Activated naive CD4-positive, alpha-beta T cell treated with anti-CD3 and anti-CD28 coated beads for 36 hours (primary cell): ENCODE measurements at regions of chr9 and their contacts with region 1.

Region 1: GRCh38 chr9:33320568-33321261 is 30.4 kb downstream of the NFX1 start:
- DNase-seq: peak; percentile 57
- H3K4me3 Mint-ChIP-seq: no peak overlapping the region
- H3K27ac Mint-ChIP-seq: peak overlapping the region; percentile 85
- H3K4me1 Mint-ChIP-seq: peaks cover 21% of the 10 kb centered on the region
- H3K27me3 Mint-ChIP-seq: no peaks in the 10 kb centered on the region

Region 2: DNA sequence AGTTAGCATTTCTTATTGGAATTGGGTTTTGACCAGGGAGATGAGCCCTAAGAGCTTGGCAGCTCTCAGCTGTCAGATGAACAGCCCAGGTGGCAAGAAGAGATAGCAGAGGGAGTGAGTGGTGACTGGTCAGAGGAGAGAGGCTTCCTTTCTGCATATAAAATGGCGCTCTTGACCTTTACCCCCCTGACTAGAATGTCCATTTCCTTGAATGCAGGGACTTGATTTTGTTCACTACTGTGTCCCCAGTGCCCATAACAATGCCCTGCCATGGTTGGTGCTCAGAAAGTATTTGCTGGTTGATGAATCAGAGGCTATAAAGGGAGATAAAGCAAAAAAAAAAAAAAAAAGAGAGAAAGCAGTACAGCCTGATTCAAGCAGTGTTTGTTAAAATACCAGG is 48.7 kb before region 1 on chr9:
- CTCF ChIA-PET with region 1: no interaction called
- intact Hi-C with region 1: no loop called
- DNase-seq: no peak
- H3K4me3 Mint-ChIP-seq: no peak overlapping the region
- H3K27ac Mint-ChIP-seq: no peak overlapping the region
- H3K4me1 Mint-ChIP-seq: peaks cover 14% of the 10 kb centered on the region
- H3K27me3 Mint-ChIP-seq: no peaks in the 10 kb centered on the region

Region 3: DNA sequence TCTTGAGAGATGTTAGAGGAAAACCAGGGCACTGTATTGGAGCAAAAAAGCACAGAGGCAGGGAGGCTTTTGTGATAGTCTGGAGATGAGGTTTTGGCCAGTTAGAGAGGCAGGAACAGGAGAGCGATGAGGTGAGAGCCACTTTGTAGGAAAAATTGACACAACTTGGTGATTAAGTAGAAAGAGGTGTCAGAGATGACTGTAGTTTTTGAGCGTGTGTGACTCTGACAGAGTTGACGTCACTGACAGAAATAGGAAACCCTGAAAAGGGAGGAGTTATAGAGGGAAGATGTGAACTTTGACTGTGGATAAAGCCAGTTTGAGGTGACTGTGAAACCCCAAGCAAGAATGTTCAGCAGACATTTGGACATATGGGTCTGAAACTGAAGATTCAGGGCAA is 14.7 kb before region 1 on chr9:
- CTCF ChIA-PET with region 1: interaction called, 3 read pairs
- intact Hi-C with region 1: loop called (anchors 1 kb)
- DNase-seq: peak; percentile 69
- H3K4me3 Mint-ChIP-seq: no peak overlapping the region
- H3K27ac Mint-ChIP-seq: no peak overlapping the region
- H3K4me1 Mint-ChIP-seq: peaks cover 10% of the 10 kb centered on the region
- H3K27me3 Mint-ChIP-seq: no peaks in the 10 kb centered on the region

Region 4: GRCh38 chr9:33354651-33355211 is 34.0 kb after region 1 on chr9:
- CTCF ChIA-PET with region 1: no interaction called
- intact Hi-C with region 1: loop called (anchors 5 kb)
- DNase-seq: no peak
- H3K4me3 Mint-ChIP-seq: no peak overlapping the region
- H3K27ac Mint-ChIP-seq: peak overlapping the region; percentile 75
- H3K4me1 Mint-ChIP-seq: no peaks in the 10 kb centered on the region
- H3K27me3 Mint-ChIP-seq: no peaks in the 10 kb centered on the region